OCI-LY7 (cell line): ENCODE measurements at regions of chr18 and their contacts with region 1.

Region 1: DNA sequence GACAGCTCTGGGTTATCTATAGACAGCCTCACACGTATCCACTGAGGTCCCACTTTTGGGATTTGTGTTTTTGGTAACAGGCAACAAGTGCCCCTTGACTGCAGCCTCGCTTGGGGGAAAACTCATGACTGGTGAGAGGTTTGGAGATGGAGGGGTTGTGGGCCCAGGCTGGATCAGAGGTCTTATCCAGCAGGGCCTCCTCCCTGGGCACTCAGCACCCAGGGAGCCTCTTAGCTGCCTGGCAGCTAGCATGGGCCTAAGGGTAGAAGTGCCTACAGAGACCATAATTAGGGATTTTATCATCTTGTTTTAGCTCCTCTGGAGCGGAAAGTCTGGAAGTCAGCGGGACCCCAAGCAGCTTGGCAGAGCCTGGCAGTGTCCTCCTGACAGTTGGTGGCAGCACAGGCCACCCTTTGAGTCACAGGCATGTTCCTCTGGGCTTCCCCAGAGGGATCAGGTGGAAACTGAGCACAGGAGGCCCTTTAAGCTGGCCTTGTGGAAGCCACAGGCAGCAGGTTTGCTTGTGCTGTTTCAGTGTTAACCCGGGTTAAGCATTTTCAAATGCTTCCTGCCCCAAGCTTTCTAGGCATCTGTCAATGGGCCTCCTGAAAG is 143.1 kb downstream of the KCTD1 start:
- DNase-seq: peak; percentile 61
- H3K4me3 ChIP-seq: no peak overlapping the region
- H3K27ac ChIP-seq: no peak overlapping the region
- H3K4me1 ChIP-seq: no peaks in the 10 kb centered on the region
- CTCF ChIP-seq: peak; percentile 69

Region 2: DNA sequence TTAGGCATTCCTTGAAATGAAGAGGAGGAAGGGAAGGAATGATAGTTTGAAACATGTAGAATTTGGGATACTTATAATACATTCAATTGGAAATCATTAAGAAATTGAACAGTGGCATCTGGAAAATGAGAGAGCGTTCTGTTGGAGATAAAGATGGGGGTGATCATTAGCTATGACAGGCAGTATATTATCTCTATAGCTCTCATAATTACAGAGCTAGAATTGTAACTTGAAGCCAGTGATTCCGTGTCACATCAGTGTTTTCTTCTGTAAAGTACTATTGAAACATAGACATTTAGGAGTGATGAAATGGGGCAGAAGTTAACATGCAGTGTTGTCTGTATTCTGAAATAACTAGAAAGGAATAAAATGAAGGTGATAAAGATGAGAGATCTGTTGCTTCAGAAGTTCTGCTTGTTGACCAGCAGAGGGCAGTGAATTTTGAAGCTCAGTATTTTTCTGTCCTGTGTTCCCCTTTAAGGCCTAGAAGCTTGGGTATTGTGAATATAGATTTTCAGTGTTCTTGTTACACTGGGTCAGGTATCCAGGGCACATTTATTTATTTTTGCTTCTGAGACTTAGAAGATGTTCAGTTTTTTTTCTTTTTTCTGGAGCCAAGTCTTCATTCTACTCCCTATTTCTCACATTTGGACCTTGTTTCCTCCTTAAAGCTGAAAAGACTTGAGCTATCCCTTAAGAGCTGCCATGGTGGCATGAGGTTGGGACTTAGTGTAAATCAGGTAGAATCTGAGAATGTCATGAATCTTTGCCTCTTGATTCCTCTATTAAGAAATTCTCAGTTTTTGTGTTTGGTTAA is 21.6 kb before region 1 on chr18:
- CTCF ChIA-PET with region 1: no interaction called
- POLR2A ChIA-PET with region 1: no interaction called
- intact Hi-C with region 1: no loop called
- DNase-seq: peak; percentile 68
- H3K4me3 ChIP-seq: no peak overlapping the region
- H3K27ac ChIP-seq: no peak overlapping the region
- H3K4me1 ChIP-seq: no peaks in the 10 kb centered on the region
- CTCF ChIP-seq: peak; percentile 95

Region 3: DNA sequence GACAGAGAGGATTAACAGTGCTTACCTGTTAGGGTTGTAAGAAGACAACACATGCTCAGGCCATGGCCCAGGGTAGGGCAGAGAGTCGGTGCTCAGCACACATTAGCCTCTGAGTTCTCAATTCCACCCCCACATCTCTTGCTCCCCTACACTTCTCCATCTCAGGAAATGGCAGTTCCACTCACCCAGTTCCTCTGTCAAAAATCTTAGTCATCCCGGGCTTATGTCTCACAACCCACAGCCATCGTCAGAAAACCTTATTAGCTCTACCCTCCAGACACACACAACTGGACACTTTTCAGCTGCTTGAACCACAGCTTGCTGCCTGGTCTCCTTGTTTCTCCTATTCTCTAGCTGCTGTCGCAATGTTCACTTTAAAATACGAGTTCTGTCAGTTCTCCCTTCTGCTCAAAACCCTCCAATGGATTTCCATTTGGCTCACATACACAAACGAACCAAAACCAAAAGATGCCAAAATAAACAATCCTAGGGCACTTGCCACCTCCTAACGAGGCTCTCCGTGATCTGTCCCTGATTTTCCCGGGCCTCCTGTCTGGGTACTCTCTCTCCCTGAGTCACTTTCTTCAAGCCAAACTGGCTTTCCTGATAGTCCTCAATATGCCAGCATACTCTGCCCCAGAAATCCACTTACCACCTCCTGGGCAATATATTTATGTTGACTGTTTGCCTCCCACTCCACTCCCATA is 53.4 kb after region 1 on chr18:
- CTCF ChIA-PET with region 1: no interaction called
- POLR2A ChIA-PET with region 1: interaction called, 3 read pairs
- intact Hi-C with region 1: loop called (anchors 5 kb)
- DNase-seq: no peak
- H3K4me3 ChIP-seq: no peak overlapping the region
- H3K27ac ChIP-seq: no peak overlapping the region
- H3K4me1 ChIP-seq: peaks cover 65% of the 10 kb centered on the region
- CTCF ChIP-seq: no peak

Region 4: GRCh38 chr18:26792661-26793060 is 387.4 kb after region 1 on chr18:
- CTCF ChIA-PET with region 1: no interaction called
- POLR2A ChIA-PET with region 1: no interaction called
- intact Hi-C with region 1: loop called (anchors 10 kb)
- DNase-seq: no peak
- H3K4me3 ChIP-seq: no peak overlapping the region
- H3K27ac ChIP-seq: no peak overlapping the region
- H3K4me1 ChIP-seq: no peaks in the 10 kb centered on the region
- CTCF ChIP-seq: no peak